ENCODE measurements at regions of chr10 and their contacts with region 1.

Region 1: DNA sequence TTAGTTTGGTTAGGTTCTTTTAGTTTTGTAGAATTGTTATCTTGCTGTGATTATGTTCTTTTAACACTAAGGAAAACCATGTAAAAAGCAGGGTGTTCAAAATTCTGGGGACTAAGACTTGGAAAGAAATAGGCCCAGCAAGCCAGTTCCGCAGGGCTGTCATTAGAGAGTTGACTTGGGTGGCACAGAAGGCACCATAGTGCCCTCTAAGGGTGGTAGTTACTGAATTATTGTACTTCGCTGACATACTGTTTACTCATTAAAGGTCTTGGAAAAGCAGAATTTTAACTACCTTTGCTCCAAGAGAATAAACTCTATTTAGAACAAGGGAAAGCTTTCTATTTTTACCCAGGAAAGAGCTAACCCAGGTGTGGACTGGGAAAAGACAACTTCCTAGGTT is 86.5 kb downstream of the OTUD1 start:
- DNase-seq: peak; percentile 20
- H3K4me3 ChIP-seq: no peak overlapping the region
- H3K27ac ChIP-seq: no peak overlapping the region
- H3K4me1 ChIP-seq: no peaks in the 10 kb centered on the region
- H3K27me3 ChIP-seq: no peaks in the 10 kb centered on the region
- CTCF ChIP-seq: peak; percentile 39

Region 2: DNA sequence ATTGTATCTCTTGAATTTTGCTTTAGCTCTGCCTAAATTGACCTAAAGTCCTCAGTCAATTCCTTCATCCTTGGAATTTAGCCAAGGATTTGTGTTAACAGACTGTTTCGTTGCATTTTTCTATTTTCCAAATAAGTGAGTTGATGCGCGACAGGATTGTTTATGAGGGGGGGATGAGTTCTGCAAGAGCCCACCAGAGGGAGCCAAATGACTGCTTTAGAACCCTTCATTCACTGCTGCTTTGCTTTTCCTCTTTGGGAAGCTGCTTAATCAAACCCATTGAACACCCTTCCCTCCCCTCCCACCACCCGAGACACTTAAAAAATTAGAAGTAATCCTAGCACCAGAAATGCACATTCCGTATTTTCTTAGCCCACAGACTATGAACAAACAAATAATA is 367.0 kb before region 1 on chr10:
- intact Hi-C with region 1: loop called (anchors 10 kb)
- DNase-seq: peak; percentile 36
- H3K4me3 ChIP-seq: no peak overlapping the region
- H3K27ac ChIP-seq: no peak overlapping the region
- H3K4me1 ChIP-seq: no peaks in the 10 kb centered on the region
- H3K27me3 ChIP-seq: no peaks in the 10 kb centered on the region
- CTCF ChIP-seq: peak; percentile 86

Region 3: DNA sequence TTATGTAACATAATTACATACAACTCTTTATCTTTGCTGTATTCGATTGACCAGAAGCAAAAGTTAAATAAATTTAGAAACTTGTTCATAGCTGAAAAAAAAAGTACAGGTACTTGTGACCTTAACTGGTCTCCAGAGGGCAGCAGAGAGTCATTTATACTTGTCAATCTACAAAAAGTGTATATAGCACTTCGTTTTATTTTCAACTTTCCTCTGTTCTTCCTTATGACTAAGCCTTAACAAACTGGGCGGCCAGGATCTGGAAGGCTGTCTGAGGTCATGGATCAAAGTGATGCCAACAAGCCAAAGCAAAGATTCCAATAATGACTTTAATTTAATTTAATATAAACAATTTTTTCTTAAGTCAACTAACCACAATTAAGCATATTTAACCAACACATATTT is 210.6 kb before region 1 on chr10:
- intact Hi-C with region 1: loop called (anchors 2 kb)
- DNase-seq: peak; percentile 63
- H3K4me3 ChIP-seq: no peak overlapping the region
- H3K27ac ChIP-seq: no peak overlapping the region
- H3K4me1 ChIP-seq: no peaks in the 10 kb centered on the region
- H3K27me3 ChIP-seq: no peaks in the 10 kb centered on the region
- CTCF ChIP-seq: peak; percentile 73

Measured in colonic mucosa (tissue), 4 donors.